Endothelial cell of umbilical vein (primary cell): ENCODE measurements at regions of chr15 and their contacts with region 1.

Region 1: DNA sequence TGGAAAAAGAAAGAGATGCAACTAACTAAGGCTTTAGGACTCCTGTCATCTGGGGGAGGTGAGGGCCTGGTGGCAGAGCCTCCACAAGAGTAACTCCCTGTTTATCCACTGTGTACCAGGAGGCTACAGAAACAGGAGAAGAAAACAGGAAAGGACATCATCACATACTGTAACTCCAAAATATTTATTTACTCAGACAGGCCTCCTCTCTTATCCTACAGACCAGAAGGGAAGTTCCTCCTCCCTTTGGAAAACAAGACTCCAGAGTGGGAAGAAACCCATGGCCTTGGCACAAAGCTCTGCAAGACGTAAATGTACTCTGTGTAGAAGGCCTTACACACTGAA is 40.1 kb upstream of the AKAP13 start:
- DNase-seq: peak; percentile 58
- H3K4me3 ChIP-seq: no peak overlapping the region
- H3K27ac ChIP-seq: peak overlapping the region; percentile 19
- H3K4me1 ChIP-seq: peaks cover 48% of the 10 kb centered on the region
- H3K27me3 ChIP-seq: no peaks in the 10 kb centered on the region
- CTCF ChIP-seq: no peak
- POLR2A ChIP-seq: no peak

Region 2: GRCh38 chr15:85354461-85354860 is 14.2 kb after region 1 on chr15:
- CTCF ChIA-PET with region 1: no interaction called
- POLR2A ChIA-PET with region 1: no interaction called
- dilution Hi-C with region 1: no loop called
- intact Hi-C with region 1: loop called (anchors 1 kb)
- DNase-seq: peak; percentile 77
- H3K4me3 ChIP-seq: no peak overlapping the region
- H3K27ac ChIP-seq: no peak overlapping the region
- H3K4me1 ChIP-seq: peaks cover 17% of the 10 kb centered on the region
- H3K27me3 ChIP-seq: no peaks in the 10 kb centered on the region
- CTCF ChIP-seq: no peak
- POLR2A ChIP-seq: no peak

Region 3: GRCh38 chr15:85463276-85463892 is 123.1 kb after region 1 on chr15:
- CTCF ChIA-PET with region 1: no interaction called
- POLR2A ChIA-PET with region 1: no interaction called
- dilution Hi-C with region 1: no loop called
- intact Hi-C with region 1: no loop called
- DNase-seq: no peak
- H3K4me3 ChIP-seq: no peak overlapping the region
- H3K27ac ChIP-seq: no peak overlapping the region
- H3K4me1 ChIP-seq: peaks cover 2% of the 10 kb centered on the region
- H3K27me3 ChIP-seq: no peaks in the 10 kb centered on the region
- CTCF ChIP-seq: no peak
- POLR2A ChIP-seq: no peak